ENCODE measurements at regions of chr11 and their contacts with region 1.

Region 1: GRCh38 chr11:121451986-121452608 is at the start of gene SORL1:
- DNase-seq: peak; percentile 60 to 84 (median 74)
- ATAC-seq: peak; percentile 59 to 65
- H3K4me3 Mint-ChIP-seq: peak within 1 kb of the TSS; percentile 93 to 100 (median 97)
- H3K27ac Mint-ChIP-seq: peak within 1 kb of the TSS; percentile 94 to 99 (median 97)
- H3K4me1 Mint-ChIP-seq: peaks cover 54 to 90% (median 86%) of the 10 kb centered on the region in 4 donors
- H3K27me3 Mint-ChIP-seq: no peaks in the 10 kb centered on the region
- polyA plus RNA-seq, gene SORL1: 157 to 230 (median 158) TPM

Region 2: GRCh38 chr11:121367001-121367843 is 84.9 kb before region 1 on chr11:
- POLR2A ChIA-PET with region 1: interaction called, 27 read pairs
- DNase-seq: peak in 6 of 10 donors; percentile 12 to 62 (median 26)
- ATAC-seq: peak; percentile 81 to 90
- H3K4me3 Mint-ChIP-seq: peak overlapping the region; percentile 67 to 93 (median 86)
- H3K27ac Mint-ChIP-seq: peak overlapping the region; percentile 13 to 98 (median 92)
- H3K4me1 Mint-ChIP-seq: peaks cover 15 to 57% (median 40%) of the 10 kb centered on the region in 4 donors
- H3K27me3 Mint-ChIP-seq: no peaks in the 10 kb centered on the region

Region 3: GRCh38 chr11:121426476-121427399 is 25.4 kb before region 1 on chr11:
- POLR2A ChIA-PET with region 1: interaction called, 275 read pairs
- DNase-seq: peak in 8 of 10 donors; percentile 34 to 68 (median 46)
- ATAC-seq: peak; percentile 68 to 92
- H3K4me3 Mint-ChIP-seq: peak overlapping the region; percentile 66 to 83 (median 81)
- H3K27ac Mint-ChIP-seq: peak overlapping the region; percentile 36 to 92 (median 70)
- H3K4me1 Mint-ChIP-seq: peaks cover 29 to 79% (median 52%) of the 10 kb centered on the region in 4 donors
- H3K27me3 Mint-ChIP-seq: no peaks in the 10 kb centered on the region

Region 4: GRCh38 chr11:121473064-121473777 is 21.1 kb after region 1 on chr11:
- POLR2A ChIA-PET with region 1: interaction called, 385 read pairs
- DNase-seq: no peak
- ATAC-seq: no peak
- H3K4me3 Mint-ChIP-seq: peak overlapping the region in 4 of 10 donors; percentile 11 to 41 (median 20)
- H3K27ac Mint-ChIP-seq: peak overlapping the region in 9 of 10 donors; percentile 38 to 88 (median 50)
- H3K4me1 Mint-ChIP-seq: peaks cover 44 to 94% (median 87%) of the 10 kb centered on the region in 4 donors
- H3K27me3 Mint-ChIP-seq: no peaks in the 10 kb centered on the region

Region 5: GRCh38 chr11:121514432-121515334 is 62.6 kb after region 1 on chr11:
- POLR2A ChIA-PET with region 1: interaction called, 12 read pairs
- DNase-seq: peak in 7 of 10 donors; percentile 7 to 45 (median 28)
- ATAC-seq: peak; percentile 57 to 76
- H3K4me3 Mint-ChIP-seq: peak overlapping the region in 9 of 10 donors; percentile 31 to 68 (median 51)
- H3K27ac Mint-ChIP-seq: peak overlapping the region; percentile 87 to 94 (median 92)
- H3K4me1 Mint-ChIP-seq: peaks cover 53 to 79% (median 75%) of the 10 kb centered on the region in 4 donors
- H3K27me3 Mint-ChIP-seq: no peaks in the 10 kb centered on the region

Region 6: GRCh38 chr11:122267602-122268001 is 815.5 kb after region 1 on chr11:
- POLR2A ChIA-PET with region 1: no interaction called
- DNase-seq: no peak
- ATAC-seq: no peak
- H3K4me3 Mint-ChIP-seq: no peak overlapping the region
- H3K27ac Mint-ChIP-seq: no peak overlapping the region
- H3K4me1 Mint-ChIP-seq: no peaks in the 10 kb centered on the region
- H3K27me3 Mint-ChIP-seq: peaks cover 3 to 35% (median 5%) of the 10 kb centered on the region in 5 donors